ENCODE measurements at regions of chr4 and their contacts with region 1.

Region 1: DNA sequence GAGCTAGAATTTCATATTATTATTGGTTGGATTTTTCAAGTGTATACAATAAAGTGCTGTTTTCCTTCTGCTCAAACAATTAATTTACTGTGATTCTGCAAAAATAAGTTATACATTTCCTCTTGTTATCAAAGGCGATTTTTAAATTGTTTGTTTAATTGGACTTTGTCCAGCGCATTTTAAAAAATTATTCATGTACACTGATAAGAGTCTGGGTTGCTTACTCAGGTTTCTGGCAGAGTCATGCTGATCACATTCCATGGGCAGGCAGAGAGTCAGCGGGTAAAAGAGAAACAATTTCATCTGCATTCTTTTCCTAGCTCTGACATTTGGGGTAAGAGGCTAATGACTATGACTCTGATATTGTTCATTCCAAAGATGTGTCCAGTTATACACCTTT is 8.9 kb downstream of the FAT4 start:
- DNase-seq: peak; percentile 55
- H3K4me3 Mint-ChIP-seq: peak overlapping the region; percentile 49
- H3K27ac Mint-ChIP-seq: peak overlapping the region; percentile 72
- H3K4me1 Mint-ChIP-seq: peaks cover 41% of the 10 kb centered on the region
- H3K27me3 Mint-ChIP-seq: no peaks in the 10 kb centered on the region
- CTCF ChIP-seq: no peak

Region 2: GRCh38 chr4:125334926-125335325 is 11.3 kb after region 1 on chr4:
- CTCF ChIA-PET with region 1: interaction called, 3 read pairs
- POLR2A ChIA-PET with region 1: interaction called, 14 read pairs
- intact Hi-C with region 1: no loop called
- DNase-seq: no peak
- H3K4me3 Mint-ChIP-seq: no peak overlapping the region
- H3K27ac Mint-ChIP-seq: no peak overlapping the region
- H3K4me1 Mint-ChIP-seq: peaks cover 6% of the 10 kb centered on the region
- H3K27me3 Mint-ChIP-seq: no peaks in the 10 kb centered on the region
- CTCF ChIP-seq: no peak

Region 3: GRCh38 chr4:125368671-125369081 is 45.0 kb after region 1 on chr4:
- CTCF ChIA-PET with region 1: interaction called, 3 read pairs
- POLR2A ChIA-PET with region 1: interaction called, 7 read pairs
- intact Hi-C with region 1: loop called (anchors 2 kb)
- DNase-seq: peak; percentile 73
- H3K4me3 Mint-ChIP-seq: peak overlapping the region; percentile 78
- H3K27ac Mint-ChIP-seq: peak overlapping the region; percentile 90
- H3K4me1 Mint-ChIP-seq: peaks cover 8% of the 10 kb centered on the region
- H3K27me3 Mint-ChIP-seq: no peaks in the 10 kb centered on the region
- CTCF ChIP-seq: no peak

Region 4: GRCh38 chr4:125389713-125390112 is 66.1 kb after region 1 on chr4:
- CTCF ChIA-PET with region 1: interaction called, 4 read pairs
- POLR2A ChIA-PET with region 1: interaction called, 32 read pairs
- intact Hi-C with region 1: no loop called
- DNase-seq: peak; percentile 76
- H3K4me3 Mint-ChIP-seq: peak overlapping the region; percentile 60
- H3K27ac Mint-ChIP-seq: peak overlapping the region; percentile 87
- H3K4me1 Mint-ChIP-seq: peaks cover 33% of the 10 kb centered on the region
- H3K27me3 Mint-ChIP-seq: no peaks in the 10 kb centered on the region
- CTCF ChIP-seq: no peak

Region 5: DNA sequence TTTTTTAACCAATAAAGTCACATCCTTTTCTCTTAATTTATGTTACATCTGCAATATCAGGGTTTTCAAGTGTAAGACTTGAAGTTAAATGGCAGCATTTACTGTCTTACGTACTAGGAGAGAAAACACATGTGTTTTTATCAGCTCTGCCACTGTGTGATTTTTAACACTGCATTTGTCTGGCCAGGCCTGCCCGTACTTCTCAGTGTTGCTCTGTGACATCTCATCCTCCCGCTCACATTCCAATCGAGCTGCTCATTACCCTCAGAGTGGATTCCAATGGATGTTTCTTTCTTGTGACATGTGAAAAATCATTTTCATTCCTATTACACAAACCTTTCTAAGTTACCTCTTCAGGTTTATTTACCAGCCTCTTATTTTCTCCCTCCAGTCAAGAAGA is 411.4 kb after region 1 on chr4:
- CTCF ChIA-PET with region 1: interaction called, 4 read pairs
- POLR2A ChIA-PET with region 1: interaction called, 20 read pairs
- intact Hi-C with region 1: no loop called
- DNase-seq: peak; percentile 85
- H3K4me3 Mint-ChIP-seq: no peak overlapping the region
- H3K27ac Mint-ChIP-seq: peak overlapping the region; percentile 92
- H3K4me1 Mint-ChIP-seq: peaks cover 50% of the 10 kb centered on the region
- H3K27me3 Mint-ChIP-seq: no peaks in the 10 kb centered on the region
- CTCF ChIP-seq: no peak

Measured in MCF 10A (cell line).